GM13976 (cell line): ENCODE measurements at regions of chr1 and their contacts with region 1.

Region 1: DNA sequence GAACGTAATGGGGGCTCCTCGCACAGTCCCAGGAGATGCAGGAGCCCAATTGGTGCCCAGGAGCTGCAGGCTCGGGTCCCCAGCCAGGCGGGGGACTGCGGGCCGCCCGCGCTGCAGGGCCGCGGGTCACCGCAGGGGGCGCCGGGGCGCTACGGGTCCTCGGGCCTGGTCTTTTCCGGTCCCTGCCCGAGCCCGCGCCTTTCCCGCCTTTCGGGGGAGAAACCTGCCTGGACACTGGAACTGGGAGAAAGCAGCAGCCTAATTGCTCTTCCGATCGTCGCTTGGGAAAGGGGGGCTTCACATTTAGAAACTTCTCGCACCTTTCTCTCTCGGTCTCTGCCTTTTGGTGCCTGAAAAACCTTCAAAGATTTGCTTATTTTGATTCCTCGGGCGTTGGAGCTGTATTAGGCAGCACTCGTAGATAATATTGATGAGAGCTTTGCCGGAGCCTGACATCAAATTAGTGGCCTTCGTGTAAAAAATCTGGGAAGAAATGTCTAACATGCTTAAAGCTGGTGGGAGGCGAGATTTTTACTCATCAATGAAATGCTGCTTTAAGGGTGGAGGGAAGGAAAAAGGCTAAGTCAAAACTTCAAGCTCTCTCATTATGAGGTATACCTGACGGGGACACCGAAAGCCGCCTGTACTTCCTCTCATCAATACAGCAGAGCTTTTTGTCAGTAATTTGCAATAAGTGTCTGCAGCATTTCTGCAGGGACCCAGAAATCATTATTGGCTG is 12.6 kb upstream of the BARHL2 start:
- DNase-seq: peak; percentile 58
- CTCF ChIP-seq: peak; percentile 52

Region 2: GRCh38 chr1:90823686-90824085 is 94.0 kb after region 1 on chr1:
- in situ Hi-C with region 1: no loop called
- DNase-seq: no peak
- CTCF ChIP-seq: no peak

Region 3: GRCh38 chr1:90834886-90835660 is 105.4 kb after region 1 on chr1:
- in situ Hi-C with region 1: loop called (anchors 5 kb)
- DNase-seq: no peak
- CTCF ChIP-seq: no peak